ENCODE measurements at regions of chr2 and their contacts with region 1.

Region 1: GRCh38 chr2:8334866-8335325 is 347.0 kb upstream of the ID2 start:
- DNase-seq: no peak
- H3K4me3 Mint-ChIP-seq: no peak overlapping the region
- H3K27ac Mint-ChIP-seq: no peak overlapping the region
- H3K4me1 Mint-ChIP-seq: peaks cover 16% of the 10 kb centered on the region
- H3K27me3 Mint-ChIP-seq: peaks cover 24% of the 10 kb centered on the region

Region 2: GRCh38 chr2:8303322-8303832 is 31.5 kb before region 1 on chr2:
- intact Hi-C with region 1: loop called (anchors 1 kb)
- DNase-seq: peak; percentile 82
- H3K4me3 Mint-ChIP-seq: peak overlapping the region; percentile 49
- H3K27ac Mint-ChIP-seq: peak overlapping the region; percentile 47
- H3K4me1 Mint-ChIP-seq: peaks cover 81% of the 10 kb centered on the region
- H3K27me3 Mint-ChIP-seq: no peaks in the 10 kb centered on the region

Region 3: DNA sequence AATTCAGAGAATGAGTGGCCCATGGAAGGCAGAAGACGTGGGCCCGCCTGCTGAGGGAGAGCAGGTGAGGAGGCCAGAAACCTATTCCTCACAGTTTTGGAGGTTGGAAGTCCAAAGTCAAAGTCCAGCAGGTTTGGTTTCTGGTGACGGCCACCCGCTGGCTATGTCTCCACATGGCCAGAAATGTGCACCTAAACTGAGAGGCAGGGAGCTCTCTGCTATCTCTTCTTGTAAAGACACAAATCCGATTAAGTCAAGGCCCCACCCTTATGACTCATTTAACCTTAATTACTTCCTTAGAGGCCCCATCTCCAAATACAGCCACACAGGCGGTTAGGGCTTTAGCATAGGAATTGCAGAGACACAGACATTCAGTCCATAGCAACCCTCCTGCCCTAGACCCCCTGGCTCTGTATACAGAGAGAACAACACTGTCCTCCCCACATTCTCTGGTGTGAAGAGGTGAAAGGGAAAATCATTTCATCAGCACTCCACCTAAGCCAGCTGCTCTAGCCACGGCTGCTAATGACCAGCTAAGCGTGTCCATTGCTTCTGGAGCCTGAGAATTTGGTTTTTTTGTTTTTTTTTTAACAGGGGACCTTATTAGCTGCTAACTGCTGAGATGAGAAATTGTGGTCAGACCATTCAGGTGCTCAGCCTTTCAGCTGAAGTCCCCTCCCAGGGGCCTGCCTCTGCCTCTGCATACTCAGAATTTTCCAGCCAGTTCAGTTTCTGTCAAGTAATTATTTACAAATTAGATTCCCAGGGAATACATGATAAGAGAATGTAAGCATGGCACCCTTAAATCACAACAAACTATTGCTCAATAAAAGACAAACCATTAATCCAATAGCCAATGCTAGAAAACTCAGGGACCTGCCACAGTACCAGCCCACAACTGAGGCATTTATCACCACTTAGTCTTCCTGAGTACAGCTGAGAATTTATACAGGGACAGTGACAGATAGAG is 21.8 kb before region 1 on chr2:
- intact Hi-C with region 1: loop called (anchors 1 kb)
- DNase-seq: no peak
- H3K4me3 Mint-ChIP-seq: no peak overlapping the region
- H3K27ac Mint-ChIP-seq: no peak overlapping the region
- H3K4me1 Mint-ChIP-seq: peaks cover 60% of the 10 kb centered on the region
- H3K27me3 Mint-ChIP-seq: peaks cover 22% of the 10 kb centered on the region

Region 4: GRCh38 chr2:8346208-8346607 is 11.3 kb after region 1 on chr2:
- intact Hi-C with region 1: no loop called
- DNase-seq: no peak
- H3K4me3 Mint-ChIP-seq: no peak overlapping the region
- H3K27ac Mint-ChIP-seq: no peak overlapping the region
- H3K4me1 Mint-ChIP-seq: peaks cover 8% of the 10 kb centered on the region
- H3K27me3 Mint-ChIP-seq: peaks cover 5% of the 10 kb centered on the region

Region 5: GRCh38 chr2:8477552-8478470 is 142.9 kb after region 1 on chr2:
- intact Hi-C with region 1: loop called (anchors 1 kb)
- DNase-seq: no peak
- H3K4me3 Mint-ChIP-seq: peak overlapping the region; percentile 5
- H3K27ac Mint-ChIP-seq: peak overlapping the region; percentile 72
- H3K4me1 Mint-ChIP-seq: peaks cover 79% of the 10 kb centered on the region
- H3K27me3 Mint-ChIP-seq: no peaks in the 10 kb centered on the region

Measured in activated T-helper 2 cell treated with anti-CD3 and anti-CD28 coated beads, Interferon-gamma antibody, Interleukin-2, Interleukin-4, amounts not matched to agents 10 μg/mL and 5 μg/mL and 100 μg/mL, durations not matched to agents 14 hours and 24 hours and 36 hours (primary cell).